Aorta (tissue), 5 donors: ENCODE measurements at regions of chr17 and their contacts with region 1.

Region 1: GRCh38 chr17:27353461-27354050 is 59.6 kb downstream of the WSB1 start:
- DNase-seq: peak; percentile 96 to 97
- ATAC-seq: peak; percentile 96
- H3K4me3 ChIP-seq: peak overlapping the region in 1 of 2 donors; percentile 59
- H3K27ac ChIP-seq: peak overlapping the region; percentile 58 to 79
- H3K4me1 ChIP-seq: no peaks in the 10 kb centered on the region
- H3K27me3 ChIP-seq: no peaks in the 10 kb centered on the region

Region 2: GRCh38 chr17:27306276-27306835 is 47.2 kb before region 1 on chr17:
- intact Hi-C with region 1: no loop called
- DNase-seq: no peak
- ATAC-seq: no peak
- H3K4me3 ChIP-seq: no peak overlapping the region
- H3K27ac ChIP-seq: no peak overlapping the region
- H3K4me1 ChIP-seq: no peaks in the 10 kb centered on the region
- H3K27me3 ChIP-seq: no peaks in the 10 kb centered on the region

Region 3: GRCh38 chr17:27323524-27324206 is 29.9 kb before region 1 on chr17:
- intact Hi-C with region 1: no loop called
- DNase-seq: peak in 1 of 2 donors; percentile 85
- ATAC-seq: peak; percentile 58
- H3K4me3 ChIP-seq: no peak overlapping the region
- H3K27ac ChIP-seq: peak overlapping the region in 1 of 2 donors; percentile 26
- H3K4me1 ChIP-seq: peaks cover 0 to 3% of the 10 kb centered on the region in 2 donors
- H3K27me3 ChIP-seq: no peaks in the 10 kb centered on the region

Region 4: DNA sequence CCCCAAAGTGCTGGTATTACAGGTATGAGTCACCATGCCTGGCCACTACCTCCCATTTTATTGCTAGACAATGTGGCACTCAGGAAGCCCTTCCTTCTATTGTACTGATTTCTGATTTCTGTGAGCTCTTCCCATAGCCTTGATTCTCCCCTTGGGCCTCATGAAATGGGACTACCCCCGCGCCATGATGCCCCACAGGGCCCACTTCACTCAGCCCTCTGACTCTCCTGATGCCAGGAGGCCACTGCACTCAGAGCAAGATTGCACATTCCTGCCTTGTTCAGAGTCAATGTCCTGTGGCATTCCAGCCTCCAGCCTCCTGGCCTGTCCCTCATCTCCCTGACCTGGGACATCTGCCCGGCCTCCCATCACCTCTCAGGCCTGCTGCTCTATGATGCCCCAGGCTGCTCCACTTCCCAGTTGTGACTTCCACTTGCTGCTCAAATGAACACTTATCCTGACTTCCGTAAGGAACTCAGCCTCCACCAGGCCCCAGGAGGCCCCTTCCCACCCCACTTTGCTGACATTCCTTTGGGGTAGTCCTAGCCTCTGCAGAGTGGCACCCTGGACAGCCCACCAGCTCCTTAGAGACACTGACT is 36.1 kb after region 1 on chr17:
- intact Hi-C with region 1: loop called in 1 of 2 experiments (anchors 2 kb)
- DNase-seq: no peak
- ATAC-seq: no peak
- H3K4me3 ChIP-seq: no peak overlapping the region
- H3K27ac ChIP-seq: no peak overlapping the region
- H3K4me1 ChIP-seq: no peaks in the 10 kb centered on the region
- H3K27me3 ChIP-seq: no peaks in the 10 kb centered on the region

Region 5: DNA sequence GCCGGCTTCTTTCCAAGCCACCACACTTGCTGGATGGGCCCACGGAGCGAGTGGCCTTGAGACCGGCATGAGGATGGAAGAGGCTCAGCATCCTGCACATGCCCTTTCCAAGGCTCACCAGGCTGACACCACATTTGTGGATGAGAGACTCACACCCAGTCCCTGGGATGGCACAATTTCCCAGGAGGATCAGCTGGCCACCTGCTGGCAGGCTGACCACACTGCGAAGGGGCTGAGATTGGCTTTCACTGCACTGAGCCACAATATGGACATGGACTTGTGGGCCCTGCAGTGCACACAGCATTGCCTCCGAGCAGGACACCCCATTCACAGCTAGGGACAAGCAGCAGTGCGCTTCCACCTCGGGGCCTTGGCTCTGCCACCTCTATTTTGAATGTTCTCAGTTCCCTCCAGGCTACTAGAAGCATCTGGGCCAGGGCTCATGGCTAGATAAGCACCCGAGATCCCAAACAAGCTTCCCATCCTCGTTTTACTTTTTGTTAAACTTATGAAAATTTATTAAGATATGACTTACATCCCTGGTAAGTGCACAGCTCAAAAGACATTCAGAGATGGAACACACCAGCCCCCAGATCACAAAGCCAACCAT is 77.4 kb after region 1 on chr17:
- intact Hi-C with region 1: loop called in 1 of 2 experiments (anchors 2 kb)
- DNase-seq: peak; percentile 64 to 76
- ATAC-seq: peak; percentile 33
- H3K4me3 ChIP-seq: no peak overlapping the region
- H3K27ac ChIP-seq: no peak overlapping the region
- H3K4me1 ChIP-seq: no peaks in the 10 kb centered on the region
- H3K27me3 ChIP-seq: no peaks in the 10 kb centered on the region